ENCODE measurements at regions of chr5 and their contacts with region 1.

Region 1: DNA sequence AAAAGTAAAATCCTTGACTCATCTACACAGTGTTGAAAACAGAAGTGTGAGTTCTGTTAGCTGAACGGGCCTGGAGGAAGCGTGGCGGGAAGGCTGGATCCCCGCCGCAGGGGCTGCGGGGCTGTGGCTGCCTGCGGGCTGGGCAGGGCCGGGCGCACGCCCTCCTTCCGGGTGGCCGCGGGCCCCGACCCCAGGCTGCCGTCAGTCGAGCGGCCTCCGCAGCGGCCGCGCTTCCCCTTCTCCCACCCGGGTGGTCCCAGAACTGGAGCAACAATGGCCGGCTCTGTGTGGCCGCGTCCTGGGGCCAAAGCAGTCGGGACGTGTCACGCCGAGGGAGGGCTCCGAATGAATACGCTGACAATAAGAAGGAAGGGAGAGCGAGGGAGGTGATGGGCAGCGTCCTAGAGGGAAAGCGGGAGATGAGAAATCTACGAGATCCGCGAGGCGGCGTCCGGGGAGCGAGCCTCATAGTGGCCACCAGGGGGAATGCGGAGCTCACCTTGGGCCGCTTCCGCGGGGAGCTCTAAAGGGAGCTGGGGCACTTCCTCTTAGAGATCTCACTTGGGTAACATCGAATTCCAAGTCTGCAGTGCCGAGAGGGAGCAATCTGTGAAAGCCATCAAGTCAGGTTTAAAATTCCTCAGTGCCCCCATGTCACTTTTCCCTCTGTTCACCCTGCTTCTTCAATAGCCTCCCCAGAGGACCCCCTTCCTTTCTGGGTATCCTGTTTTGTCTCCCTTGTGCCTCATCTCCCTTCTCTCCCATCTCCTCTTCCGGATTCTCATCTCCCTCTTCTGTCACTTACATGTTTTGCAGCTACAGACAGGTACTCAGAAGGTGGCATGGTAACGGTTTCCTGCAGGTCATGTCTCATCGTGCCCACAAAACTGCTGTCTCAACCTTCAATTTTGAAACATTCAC is 83.9 kb downstream of the SLC1A3 start:
- DNase-seq: peak; percentile 82 to 83 (median 83)
- H3K4me3 ChIP-seq: peak overlapping the region; percentile 34 to 82 (median 68)
- H3K27ac ChIP-seq: peak overlapping the region in 1 of 2 experiments; percentile 69
- H3K4me1 ChIP-seq: peaks cover 0 to 41% (median 31%) of the 10 kb centered on the region in 4 experiments
- H3K27me3 ChIP-seq: no peaks in the 10 kb centered on the region

Region 2: GRCh38 chr5:36414869-36415282 is 275.4 kb before region 1 on chr5:
- CTCF ChIA-PET with region 1: interaction called, 255 read pairs
- POLR2A ChIA-PET with region 1: interaction called, 4 read pairs
- DNase-seq: peak; percentile 51 to 64 (median 58)
- H3K4me3 ChIP-seq: no peak overlapping the region
- H3K27ac ChIP-seq: no peak overlapping the region
- H3K4me1 ChIP-seq: peaks cover 0 to 9% (median 6%) of the 10 kb centered on the region in 4 experiments
- H3K27me3 ChIP-seq: no peaks in the 10 kb centered on the region

Region 3: DNA sequence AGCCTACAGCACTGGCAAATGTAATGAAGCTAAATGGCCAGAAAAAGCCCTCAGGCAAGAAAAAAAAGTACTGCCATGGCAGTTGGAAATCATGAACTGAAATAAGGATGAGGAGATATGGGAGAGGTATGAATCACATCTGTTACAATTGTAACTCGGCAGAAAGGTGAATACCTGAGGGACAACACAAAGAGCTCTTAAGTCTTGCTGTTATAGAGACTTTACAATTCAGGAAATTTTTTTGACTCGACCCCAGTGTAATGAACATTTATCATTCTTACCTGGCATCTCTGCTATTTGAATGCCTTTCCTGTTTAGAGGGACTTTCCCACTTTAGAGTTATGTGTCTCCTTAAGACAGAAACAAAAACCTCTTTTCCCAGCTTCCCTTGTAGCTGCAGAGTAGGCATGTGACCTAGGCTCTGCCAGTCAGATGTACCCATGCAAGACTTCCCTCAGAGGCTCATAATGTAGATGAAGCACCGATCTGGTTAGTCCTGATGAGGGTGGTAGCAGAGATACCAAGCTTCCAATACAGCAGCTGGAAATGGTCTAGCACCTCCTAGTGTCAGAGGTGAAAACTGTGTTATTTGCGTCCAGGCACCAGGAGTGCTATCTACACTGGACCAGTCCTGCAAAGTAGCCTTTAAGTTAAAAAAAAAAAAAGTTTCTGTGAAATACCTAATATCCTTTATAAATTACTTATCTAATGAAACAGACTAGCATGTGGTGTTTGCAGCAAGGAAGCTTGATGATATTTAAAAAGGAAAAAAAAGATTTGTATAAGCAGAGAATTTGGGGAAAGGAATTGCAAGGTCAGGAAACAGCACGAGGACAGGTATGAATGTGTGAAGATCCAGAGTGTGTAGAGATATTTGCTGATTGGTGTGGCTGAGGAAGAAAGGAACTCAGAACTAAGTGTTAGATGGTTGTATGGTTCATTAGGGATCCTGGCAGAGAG is 230.8 kb before region 1 on chr5:
- CTCF ChIA-PET with region 1: no interaction called
- POLR2A ChIA-PET with region 1: no interaction called
- DNase-seq: peak; percentile 12 to 26 (median 13)
- H3K4me3 ChIP-seq: no peak overlapping the region
- H3K27ac ChIP-seq: no peak overlapping the region
- H3K4me1 ChIP-seq: peaks cover 0 to 2% (median 0%) of the 10 kb centered on the region in 4 experiments
- H3K27me3 ChIP-seq: no peaks in the 10 kb centered on the region

Region 4: DNA sequence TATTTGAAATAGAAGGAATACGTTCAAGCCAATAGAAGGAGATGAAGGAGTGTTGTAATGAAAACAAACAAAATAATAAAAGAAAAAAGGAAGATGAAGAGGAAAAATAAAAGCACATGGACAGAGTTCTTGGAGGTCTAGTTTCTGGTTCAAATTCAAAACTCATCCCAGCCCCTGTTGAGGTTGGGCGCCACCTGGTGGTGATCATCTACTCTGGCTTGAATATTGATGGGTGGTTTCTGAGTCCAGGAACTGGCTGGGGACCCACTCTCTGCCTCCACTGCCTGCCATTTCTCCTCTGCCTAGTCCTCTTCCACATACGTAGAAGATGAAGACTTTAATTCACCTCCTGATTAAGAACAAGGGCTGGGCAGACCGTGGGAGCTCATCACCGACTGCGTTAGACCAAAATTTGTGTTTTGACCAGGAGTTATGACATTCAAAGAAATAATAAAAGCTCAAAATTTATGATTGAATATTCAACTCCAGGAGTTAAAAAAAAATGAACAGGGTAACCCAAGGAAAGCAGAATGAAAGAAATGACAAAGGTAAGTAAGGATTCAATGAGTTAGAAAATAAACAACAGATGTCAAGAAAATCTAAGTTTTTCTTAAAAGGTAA is 182.9 kb before region 1 on chr5:
- CTCF ChIA-PET with region 1: interaction called, 80 read pairs
- POLR2A ChIA-PET with region 1: interaction called, 3 read pairs
- DNase-seq: peak; percentile 67 to 82 (median 76)
- H3K4me3 ChIP-seq: no peak overlapping the region
- H3K27ac ChIP-seq: no peak overlapping the region
- H3K4me1 ChIP-seq: no peaks in the 10 kb centered on the region
- H3K27me3 ChIP-seq: no peaks in the 10 kb centered on the region

Region 5: GRCh38 chr5:36657563-36657995 is 32.7 kb before region 1 on chr5:
- CTCF ChIA-PET with region 1: interaction called, 34 read pairs
- POLR2A ChIA-PET with region 1: no interaction called
- DNase-seq: peak; percentile 92 to 98 (median 98)
- H3K4me3 ChIP-seq: peak overlapping the region in 2 of 7 experiments; percentile 14 to 39
- H3K27ac ChIP-seq: peak overlapping the region; percentile 40 to 67
- H3K4me1 ChIP-seq: peaks cover 10 to 47% (median 31%) of the 10 kb centered on the region in 4 experiments
- H3K27me3 ChIP-seq: no peaks in the 10 kb centered on the region

Region 6: GRCh38 chr5:36701085-36701698 is 10.9 kb after region 1 on chr5:
- CTCF ChIA-PET with region 1: interaction called, 11 read pairs
- POLR2A ChIA-PET with region 1: no interaction called
- DNase-seq: no peak
- H3K4me3 ChIP-seq: no peak overlapping the region
- H3K27ac ChIP-seq: no peak overlapping the region
- H3K4me1 ChIP-seq: peaks cover 0 to 3% (median 0%) of the 10 kb centered on the region in 4 experiments
- H3K27me3 ChIP-seq: no peaks in the 10 kb centered on the region

Region 7: GRCh38 chr5:37015795-37016666 is 325.7 kb after region 1 on chr5:
- CTCF ChIA-PET with region 1: no interaction called
- POLR2A ChIA-PET with region 1: no interaction called
- DNase-seq: no peak
- H3K4me3 ChIP-seq: no peak overlapping the region
- H3K27ac ChIP-seq: no peak overlapping the region
- H3K4me1 ChIP-seq: no peaks in the 10 kb centered on the region
- H3K27me3 ChIP-seq: no peaks in the 10 kb centered on the region

Region 8: GRCh38 chr5:37565067-37565670 is 874.9 kb after region 1 on chr5:
- CTCF ChIA-PET with region 1: no interaction called
- POLR2A ChIA-PET with region 1: no interaction called
- DNase-seq: no peak
- H3K4me3 ChIP-seq: no peak overlapping the region
- H3K27ac ChIP-seq: no peak overlapping the region
- H3K4me1 ChIP-seq: peaks cover 0 to 2% (median 0%) of the 10 kb centered on the region in 4 experiments
- H3K27me3 ChIP-seq: no peaks in the 10 kb centered on the region